Ascending aorta (tissue), 2 donors: ENCODE measurements at regions of chr11 and their contacts with region 1.

Region 1: DNA sequence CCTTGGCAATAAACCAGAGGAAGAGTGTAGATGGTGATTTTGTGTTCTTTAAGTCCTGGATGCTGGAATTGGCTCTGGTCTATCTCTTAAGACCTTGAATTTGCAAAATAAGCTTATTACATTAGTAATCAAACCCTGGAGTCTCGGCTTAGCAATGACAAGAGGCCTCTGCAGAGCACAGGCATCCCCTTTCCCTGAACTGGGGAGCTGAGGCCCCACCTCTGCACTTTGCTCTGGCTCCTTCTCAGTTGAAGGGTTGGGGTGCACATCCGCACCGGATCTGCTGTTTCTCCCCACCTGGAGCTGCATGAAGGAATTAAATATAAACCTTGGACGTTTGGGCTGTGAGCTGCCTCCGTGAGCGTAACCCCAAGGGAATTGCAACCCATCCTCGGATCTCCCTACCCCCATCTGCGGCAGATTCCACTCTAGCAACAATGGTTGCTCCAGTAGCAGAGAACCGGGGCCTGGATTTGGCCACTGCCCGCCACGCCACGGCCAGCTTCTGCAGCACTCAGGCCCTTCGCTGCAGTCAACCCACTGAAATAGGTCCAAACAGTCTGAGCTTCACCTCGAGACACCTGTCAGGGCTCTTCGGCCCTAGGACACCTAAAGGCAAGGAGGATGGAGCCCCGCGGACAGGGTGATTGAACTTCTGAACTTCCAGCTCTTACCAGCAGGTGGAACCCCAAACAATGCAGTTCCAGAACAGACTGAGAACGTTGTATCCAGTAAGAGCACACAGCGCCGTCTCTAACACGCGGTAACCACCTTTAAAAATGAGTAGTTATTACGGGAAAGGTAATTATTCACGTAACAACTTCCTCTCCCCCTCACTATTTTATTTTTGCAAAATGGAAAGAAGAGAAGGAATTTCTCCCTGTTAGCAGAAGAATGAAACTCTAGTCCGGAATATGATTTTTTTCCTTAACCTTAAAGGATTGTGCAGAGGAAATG is 54.8 kb upstream of the CAPRIN1 start:
- DNase-seq: peak in 1 of 2 donors; percentile 86
- H3K4me3 ChIP-seq: peak overlapping the region; percentile 7 to 33
- H3K27ac ChIP-seq: no peak overlapping the region
- H3K4me1 ChIP-seq: no peaks in the 10 kb centered on the region
- H3K27me3 ChIP-seq: no peaks in the 10 kb centered on the region
- CTCF ChIP-seq: peak; percentile 79 to 85 (median 81)

Region 2: GRCh38 chr11:34028425-34028824 is 31.6 kb after region 1 on chr11:
- intact Hi-C with region 1: loop called (anchors 1 kb)
- DNase-seq: peak in 1 of 2 donors; percentile 83
- H3K4me3 ChIP-seq: no peak overlapping the region
- H3K27ac ChIP-seq: peak overlapping the region; percentile 53 to 80
- H3K4me1 ChIP-seq: peaks cover 0 to 17% of the 10 kb centered on the region in 2 donors
- H3K27me3 ChIP-seq: no peaks in the 10 kb centered on the region
- CTCF ChIP-seq: no peak

Region 3: DNA sequence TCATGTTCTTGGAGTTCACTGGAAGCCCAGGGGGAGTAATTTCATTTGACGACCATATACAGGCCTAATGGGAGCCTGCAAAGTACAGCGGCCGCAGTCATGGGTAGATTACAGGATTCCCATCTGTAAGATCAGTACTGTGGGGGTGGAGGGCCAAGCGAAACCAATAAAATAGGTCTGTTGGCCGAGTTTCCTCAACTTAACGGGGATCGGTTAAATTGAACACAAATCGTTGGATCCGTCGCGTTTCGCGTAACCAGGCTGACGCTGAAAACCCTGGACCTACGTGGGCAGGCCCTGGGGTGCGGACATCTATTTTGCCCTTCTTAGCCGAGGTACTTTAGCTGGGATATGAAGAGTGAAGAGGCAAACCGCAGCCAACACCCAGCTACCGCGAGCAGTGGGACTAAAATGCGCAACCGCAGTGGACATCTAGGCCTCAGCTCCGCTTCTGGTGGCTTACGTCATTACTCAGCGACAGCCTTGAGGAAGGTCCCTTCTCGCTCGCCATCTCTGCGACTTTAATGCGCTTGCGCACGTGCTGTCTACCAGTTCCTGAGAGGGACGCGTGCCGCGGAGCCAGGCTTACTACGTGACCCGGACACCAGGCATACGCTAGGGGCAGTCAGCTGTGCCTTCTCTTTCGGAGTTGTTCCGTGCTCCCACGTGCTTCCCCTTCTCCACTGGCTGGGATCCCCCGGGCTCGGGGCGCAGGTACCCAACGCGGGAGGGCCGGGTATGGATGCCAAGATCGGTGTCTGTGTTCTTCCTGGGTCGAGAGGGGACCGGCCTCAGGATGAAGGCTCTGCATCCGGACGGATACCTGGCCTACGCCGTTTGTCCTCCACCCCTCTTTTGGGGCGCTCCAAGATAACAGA is 108.5 kb after region 1 on chr11 and contains the start of gene NAT10:
- intact Hi-C with region 1: loop called (anchors 2 kb)
- DNase-seq: peak; percentile 93 to 99
- H3K4me3 ChIP-seq: peak within 1 kb of the TSS; percentile 82 to 86
- H3K27ac ChIP-seq: peak within 1 kb of the TSS; percentile 93 to 95
- H3K4me1 ChIP-seq: peaks cover 4 to 5% of the 10 kb centered on the region in 2 donors
- H3K27me3 ChIP-seq: no peaks in the 10 kb centered on the region
- CTCF ChIP-seq: no peak
- total RNA-seq, gene NAT10: 11.3 TPM

Region 4: GRCh38 chr11:34174412-34175041 is 177.8 kb after region 1 on chr11:
- intact Hi-C with region 1: loop called (anchors 2 kb)
- DNase-seq: peak in 1 of 2 donors; percentile 89
- H3K4me3 ChIP-seq: peak overlapping the region; percentile 47 to 58
- H3K27ac ChIP-seq: peak overlapping the region; percentile 13 to 31
- H3K4me1 ChIP-seq: peaks cover 5 to 7% of the 10 kb centered on the region in 2 donors
- H3K27me3 ChIP-seq: no peaks in the 10 kb centered on the region
- CTCF ChIP-seq: peak; percentile 95 to 99 (median 99)